BJ (cell line): ENCODE measurements at regions of chr3 and their contacts with region 1.

Region 1: DNA sequence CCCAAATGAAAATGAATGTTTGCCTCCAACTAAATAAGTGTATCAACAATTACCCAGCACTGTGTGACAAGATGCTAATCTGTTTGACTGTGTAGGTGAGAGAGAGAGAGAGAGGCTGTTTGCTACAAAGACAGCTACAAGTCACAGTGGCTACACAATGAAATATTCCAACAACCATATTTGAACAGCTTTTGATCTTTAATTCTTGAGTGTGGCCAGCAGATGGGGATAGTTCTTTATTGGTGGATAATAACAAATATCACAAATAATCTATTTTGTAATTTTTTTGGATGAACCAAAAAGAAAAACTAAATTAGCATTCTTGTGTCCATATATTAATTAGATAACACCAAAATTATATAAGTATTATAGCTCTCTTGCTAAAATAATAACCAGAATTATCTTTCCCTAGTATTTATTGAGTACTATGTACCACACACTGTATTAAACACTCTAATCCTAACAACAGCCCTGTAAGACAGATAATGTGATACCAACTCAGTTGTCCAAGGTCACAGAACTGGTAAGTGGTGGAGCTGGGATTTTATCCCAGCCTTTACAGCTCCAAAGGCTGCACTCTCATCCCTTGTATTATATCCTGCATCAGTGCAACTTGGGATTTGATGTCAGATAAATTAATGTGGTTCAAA is 61.9 kb upstream of the C3orf80 start:
- DNase-seq: no peak
- H3K4me3 ChIP-seq: no peak overlapping the region
- H3K27me3 ChIP-seq: no peaks in the 10 kb centered on the region
- CTCF ChIP-seq: peak; percentile 42

Region 2: DNA sequence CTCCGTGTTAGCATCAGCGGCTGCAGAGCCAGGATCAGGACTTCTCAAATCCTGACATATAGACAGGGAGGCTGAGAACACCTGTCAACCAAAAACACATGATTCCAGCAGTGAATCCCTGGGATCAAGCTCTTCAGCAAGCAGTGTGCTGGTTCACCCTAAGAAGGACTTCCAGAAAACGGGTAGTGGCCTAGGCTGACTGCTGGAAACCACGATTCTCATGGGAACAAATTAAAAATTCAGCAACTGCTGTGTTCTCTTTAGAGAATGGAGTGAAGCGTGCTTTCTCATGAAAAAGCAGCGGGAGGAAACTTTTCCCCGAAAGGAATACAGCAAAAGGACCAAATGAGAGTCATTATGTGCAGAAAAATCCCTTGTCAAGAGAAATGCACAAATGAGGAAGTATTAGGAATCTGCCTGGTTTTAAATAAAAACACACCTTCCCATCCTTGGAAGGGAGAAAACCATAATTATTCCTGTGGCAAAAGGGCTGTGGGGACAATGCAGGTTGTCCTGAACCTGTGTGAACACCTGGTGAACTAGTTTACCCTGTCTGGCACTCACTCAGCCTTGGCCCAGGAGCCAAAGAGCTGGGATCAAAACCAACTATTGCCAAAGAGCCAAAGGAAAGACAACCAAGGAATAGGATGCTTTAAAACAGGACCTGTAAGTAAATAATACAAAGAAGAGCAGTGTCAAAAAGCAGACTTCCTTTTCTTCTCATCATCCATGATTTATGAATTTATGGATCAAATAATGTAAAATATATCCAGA is 161.3 kb before region 1 on chr3:
- CTCF ChIA-PET with region 1: no interaction called
- POLR2A ChIA-PET with region 1: no interaction called
- DNase-seq: no peak
- H3K4me3 ChIP-seq: no peak overlapping the region
- H3K27me3 ChIP-seq: no peaks in the 10 kb centered on the region
- CTCF ChIP-seq: no peak

Region 3: DNA sequence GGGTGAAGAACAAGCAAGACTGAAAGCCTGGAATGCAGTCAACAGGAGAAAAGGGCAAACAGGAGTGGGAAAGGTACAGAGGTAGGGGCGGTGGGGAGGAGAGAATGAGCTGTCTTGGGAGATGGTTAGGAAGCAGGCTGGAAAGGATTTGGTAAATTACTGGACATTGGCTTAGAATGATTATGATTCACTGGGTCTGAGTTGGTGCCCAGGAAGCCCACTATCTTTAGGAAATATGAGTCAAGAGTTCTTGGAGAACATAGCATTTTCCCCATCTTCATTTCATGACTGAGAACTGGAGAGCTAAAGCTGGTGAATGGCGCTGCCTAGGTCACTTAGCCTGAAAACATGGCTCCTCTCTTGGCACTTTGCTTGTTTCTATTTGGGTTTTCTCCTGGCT is 12.8 kb before region 1 on chr3:
- CTCF ChIA-PET with region 1: interaction called, 34 read pairs
- POLR2A ChIA-PET with region 1: no interaction called
- DNase-seq: no peak
- H3K4me3 ChIP-seq: no peak overlapping the region
- H3K27me3 ChIP-seq: no peaks in the 10 kb centered on the region
- CTCF ChIP-seq: no peak

Region 4: GRCh38 chr3:160343132-160343531 is 179.8 kb after region 1 on chr3:
- CTCF ChIA-PET with region 1: interaction called, 10 read pairs
- POLR2A ChIA-PET with region 1: no interaction called
- DNase-seq: no peak
- H3K4me3 ChIP-seq: no peak overlapping the region
- H3K27me3 ChIP-seq: no peaks in the 10 kb centered on the region
- CTCF ChIP-seq: peak; percentile 32; the same call in 1 of the 2 replicates

Region 5: GRCh38 chr3:160413613-160414248 is 250.4 kb after region 1 on chr3:
- CTCF ChIA-PET with region 1: interaction called, 34 read pairs
- POLR2A ChIA-PET with region 1: no interaction called
- DNase-seq: no peak
- H3K4me3 ChIP-seq: no peak overlapping the region
- H3K27me3 ChIP-seq: no peaks in the 10 kb centered on the region
- CTCF ChIP-seq: peak; percentile 82